ENCODE measurements at regions of chr20 and their contacts with region 1.

Region 1: DNA sequence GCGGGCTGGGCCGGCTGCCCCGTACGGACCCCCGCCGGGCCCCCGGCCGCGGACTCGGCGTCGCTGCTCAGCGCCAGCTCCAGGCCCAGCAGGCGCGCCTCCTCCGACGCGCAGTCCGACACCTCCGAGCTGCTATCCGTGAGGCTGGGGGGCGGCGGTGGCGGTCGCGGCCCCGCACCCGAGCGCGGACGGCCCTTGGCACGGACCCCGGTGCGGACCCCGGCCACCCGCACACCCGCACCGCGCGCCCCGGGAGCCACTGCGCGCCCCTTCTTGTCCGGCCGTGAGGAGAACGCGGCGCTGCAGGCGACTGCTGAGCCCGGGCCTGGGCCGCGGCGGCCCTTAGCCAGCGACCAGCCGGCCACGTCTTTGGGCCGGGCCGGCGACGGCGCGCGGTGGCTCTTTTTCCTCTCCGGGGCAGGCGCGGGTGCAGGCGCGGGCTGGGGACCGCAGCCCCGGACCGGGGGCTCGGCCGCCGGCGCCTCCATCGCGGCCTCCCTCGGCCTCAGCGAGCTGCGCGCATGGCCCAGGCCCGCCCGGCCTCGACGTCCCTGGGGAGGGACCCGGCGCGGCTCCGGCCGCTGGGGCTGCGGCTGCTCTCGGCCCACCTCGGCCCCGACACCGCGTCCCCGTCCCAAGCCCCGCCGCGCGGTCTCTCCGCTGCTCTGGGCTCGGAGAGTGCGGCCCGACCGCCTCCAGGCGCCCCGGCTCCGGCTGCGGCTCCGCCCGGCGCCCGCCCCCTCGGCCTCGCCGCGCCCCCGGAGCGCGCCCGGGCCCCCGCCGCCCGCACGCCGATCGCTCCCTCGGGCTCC is 12.9 kb upstream of the TLDC2 start:
- DNase-seq: no peak
- ATAC-seq: peak; percentile 78
- H3K4me3 ChIP-seq: peak overlapping the region; percentile 64 to 68
- H3K27ac ChIP-seq: no peak overlapping the region
- H3K4me1 ChIP-seq: peaks cover 26% of the 10 kb centered on the region
- H3K27me3 ChIP-seq: no peaks in the 10 kb centered on the region
- CTCF ChIP-seq: no peak

Region 2: DNA sequence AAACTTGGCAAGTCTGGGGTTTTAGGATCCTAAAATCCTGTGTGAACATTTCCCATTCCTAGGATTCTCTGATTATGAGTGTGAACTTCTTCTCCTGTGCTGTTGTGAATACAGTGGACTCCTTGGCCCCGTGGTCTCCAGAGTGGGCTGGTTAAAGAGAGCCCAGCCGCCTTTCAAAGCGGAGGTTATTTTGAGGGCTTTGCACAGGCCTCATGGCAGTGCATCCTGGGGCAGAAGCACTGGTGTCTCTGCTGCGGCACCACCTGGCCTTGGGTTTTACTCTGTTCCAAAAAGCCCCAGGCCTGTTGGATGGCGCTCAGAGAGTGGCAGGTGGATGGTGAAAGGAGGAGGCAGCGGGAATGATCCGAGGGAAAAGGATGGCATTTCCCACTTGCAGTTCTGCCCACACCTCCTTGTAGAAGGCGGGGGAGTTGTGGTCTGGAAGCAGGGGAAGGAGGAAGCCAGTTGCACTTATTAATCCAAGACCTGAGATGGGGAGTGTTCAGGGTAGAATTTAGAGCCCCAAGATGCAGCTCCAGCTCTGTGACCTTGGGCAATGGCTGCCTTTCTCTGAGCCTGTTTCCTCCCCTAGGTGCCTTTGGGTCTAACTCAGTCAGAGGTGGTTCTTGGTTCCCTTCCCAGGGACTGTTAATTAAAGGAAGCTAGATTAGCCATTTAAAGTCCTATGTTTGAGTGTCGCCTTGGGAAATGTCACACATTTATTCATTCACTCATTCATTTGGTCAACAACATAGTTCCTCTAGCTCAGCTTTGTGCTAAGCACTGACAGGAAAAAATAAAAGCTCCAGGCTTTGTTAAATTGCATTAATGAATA is 1614.2 kb before region 1 on chr20:
- CTCF ChIA-PET with region 1: no interaction called
- POLR2A ChIA-PET with region 1: no interaction called
- in situ Hi-C with region 1: no loop called
- intact Hi-C with region 1: no loop called
- DNase-seq: no peak
- ATAC-seq: peak; percentile 26; the same call in 1 of the 2 replicates
- H3K4me3 ChIP-seq: no peak overlapping the region
- H3K27ac ChIP-seq: no peak overlapping the region
- H3K4me1 ChIP-seq: no peaks in the 10 kb centered on the region
- H3K27me3 ChIP-seq: no peaks in the 10 kb centered on the region
- CTCF ChIP-seq: no peak

Region 3: GRCh38 chr20:36919715-36920333 is 56.8 kb after region 1 on chr20:
- CTCF ChIA-PET with region 1: no interaction called
- POLR2A ChIA-PET with region 1: interaction called, 28 read pairs
- in situ Hi-C with region 1: no loop called
- intact Hi-C with region 1: no loop called
- DNase-seq: peak; percentile 53
- ATAC-seq: peak; percentile 74; the same call in 1 of the 2 replicates
- H3K4me3 ChIP-seq: no peak overlapping the region
- H3K27ac ChIP-seq: no peak overlapping the region
- H3K4me1 ChIP-seq: no peaks in the 10 kb centered on the region
- H3K27me3 ChIP-seq: no peaks in the 10 kb centered on the region
- CTCF ChIP-seq: peak; percentile 88